ENCODE measurements at regions of chr1 and their contacts with region 1.

Region 1: GRCh38 chr1:171984850-171985485 is 143.7 kb downstream of the DNM3 start:
- DNase-seq: no peak
- ATAC-seq: peak; percentile 59

Region 2: DNA sequence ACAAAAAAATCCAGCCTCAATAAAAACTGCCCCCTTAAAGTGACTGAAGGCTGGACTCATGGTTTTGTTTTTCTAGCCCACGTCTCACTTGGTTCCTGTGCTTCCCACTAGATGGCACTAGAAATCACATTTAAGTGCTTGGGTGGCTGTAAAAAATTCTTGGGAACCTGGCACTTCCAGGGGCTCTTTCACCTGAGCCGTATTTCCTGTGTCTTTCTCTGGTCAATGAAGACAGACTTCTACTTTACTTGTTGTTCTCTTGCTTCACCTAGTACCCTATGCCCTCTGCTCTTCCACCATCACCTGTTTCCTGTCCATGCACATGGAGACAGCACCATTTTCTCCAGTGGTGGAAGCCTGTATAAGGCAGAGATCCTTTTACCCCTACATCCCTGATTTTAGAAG is 183.5 kb before region 1 on chr1:
- intact Hi-C with region 1: loop called (anchors 5 kb)
- DNase-seq: no peak
- ATAC-seq: peak; percentile 56

Region 3: GRCh38 chr1:172054172-172054571 is 69.2 kb after region 1 on chr1:
- intact Hi-C with region 1: no loop called
- DNase-seq: no peak
- ATAC-seq: no peak